ENCODE measurements at regions of chr11 and their contacts with region 1.

Region 1: GRCh38 chr11:125637840-125638239 is 12.9 kb downstream of the CHEK1 start:
- DNase-seq: no peak
- ATAC-seq: no peak
- H3K4me3 Mint-ChIP-seq: no peak overlapping the region
- H3K27ac Mint-ChIP-seq: no peak overlapping the region
- H3K4me1 Mint-ChIP-seq: no peaks in the 10 kb centered on the region
- H3K27me3 Mint-ChIP-seq: no peaks in the 10 kb centered on the region
- CTCF ChIP-seq: no peak

Region 2: GRCh38 chr11:125649465-125650166 is 11.8 kb after region 1 on chr11:
- CTCF ChIA-PET with region 1: no interaction called
- POLR2A ChIA-PET with region 1: interaction called, 10 read pairs
- DNase-seq: no peak
- ATAC-seq: no peak
- H3K4me3 Mint-ChIP-seq: no peak overlapping the region
- H3K27ac Mint-ChIP-seq: 0 out of 2 replicates have a peak overlapping the region, but pooled peaks have one; percentile 54
- H3K4me1 Mint-ChIP-seq: no peaks in the 10 kb centered on the region
- H3K27me3 Mint-ChIP-seq: no peaks in the 10 kb centered on the region
- CTCF ChIP-seq: no peak

Region 3: DNA sequence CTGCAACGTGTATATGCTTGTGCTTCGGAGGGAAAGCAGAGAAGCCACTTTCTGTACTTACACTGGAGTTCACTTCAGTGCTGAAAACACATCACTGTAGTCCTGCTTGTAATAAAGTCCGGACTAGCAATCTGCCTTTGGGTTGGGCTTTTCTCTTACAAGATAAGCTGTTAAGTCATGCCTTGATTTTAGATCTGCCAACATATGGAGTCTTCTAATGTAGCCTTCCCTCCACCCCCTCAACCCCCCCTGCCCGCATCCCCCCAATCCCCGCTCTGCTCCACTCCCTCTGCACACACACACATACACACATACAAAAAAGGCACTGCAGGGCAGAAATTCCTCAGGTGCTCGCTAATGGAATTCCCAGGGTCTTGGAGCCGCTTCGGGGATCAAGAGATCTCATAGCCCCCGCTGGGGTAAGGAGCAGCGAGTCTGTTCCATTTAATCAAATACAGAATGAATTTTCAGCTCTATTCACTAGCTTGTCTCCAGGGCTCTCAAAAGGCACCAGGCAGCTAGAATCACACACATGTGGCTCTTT is 421.5 kb after region 1 on chr11:
- CTCF ChIA-PET with region 1: no interaction called
- POLR2A ChIA-PET with region 1: no interaction called
- DNase-seq: peak; percentile 28
- ATAC-seq: no peak
- H3K4me3 Mint-ChIP-seq: no peak overlapping the region
- H3K27ac Mint-ChIP-seq: no peak overlapping the region
- H3K4me1 Mint-ChIP-seq: peaks cover 29% of the 10 kb centered on the region
- H3K27me3 Mint-ChIP-seq: no peaks in the 10 kb centered on the region
- CTCF ChIP-seq: no peak